Colonic mucosa (tissue), 4 donors: ENCODE measurements at regions of chr5 and their contacts with region 1.

Region 1: DNA sequence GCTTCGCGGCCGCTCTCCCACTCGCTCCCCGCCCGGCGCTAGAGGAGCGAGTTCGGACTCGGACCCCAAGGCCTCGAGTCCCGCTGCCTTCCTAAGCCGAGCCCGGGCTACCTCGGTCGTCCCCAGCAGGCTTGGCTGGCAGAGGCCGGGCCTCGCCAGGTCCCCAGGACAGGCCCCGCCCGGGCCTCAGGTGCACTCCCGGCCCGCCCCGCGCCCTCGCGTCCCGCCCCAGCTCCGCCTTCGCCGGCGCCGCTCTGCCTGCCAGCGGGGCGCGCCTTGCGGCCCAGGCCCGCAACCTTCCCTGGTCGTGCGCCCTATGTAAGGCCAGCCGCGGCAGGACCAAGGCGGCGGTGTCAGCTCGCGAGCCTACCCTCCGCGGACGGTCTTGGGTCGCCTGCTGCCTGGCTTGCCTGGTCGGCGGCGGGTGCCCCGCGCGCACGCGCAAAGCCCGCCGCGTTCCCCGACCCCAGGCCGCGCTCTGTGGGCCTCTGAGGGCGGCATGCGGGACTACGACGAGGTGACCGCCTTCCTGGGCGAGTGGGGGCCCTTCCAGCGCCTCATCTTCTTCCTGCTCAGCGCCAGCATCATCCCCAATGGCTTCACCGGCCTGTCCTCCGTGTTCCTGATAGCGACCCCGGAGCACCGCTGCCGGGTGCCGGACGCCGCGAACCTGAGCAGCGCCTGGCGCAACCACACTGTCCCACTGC is at the start of gene SLC22A5:
- DNase-seq: peak; percentile 84
- H3K4me3 ChIP-seq: peak within 1 kb of the TSS; percentile 78
- H3K27ac ChIP-seq: peak within 1 kb of the TSS; percentile 83
- H3K4me1 ChIP-seq: peaks cover 17% of the 10 kb centered on the region
- H3K27me3 ChIP-seq: no peaks in the 10 kb centered on the region
- CTCF ChIP-seq: no peak
- total RNA-seq, gene SLC22A5: 26.0 to 38.6 TPM

Region 2: DNA sequence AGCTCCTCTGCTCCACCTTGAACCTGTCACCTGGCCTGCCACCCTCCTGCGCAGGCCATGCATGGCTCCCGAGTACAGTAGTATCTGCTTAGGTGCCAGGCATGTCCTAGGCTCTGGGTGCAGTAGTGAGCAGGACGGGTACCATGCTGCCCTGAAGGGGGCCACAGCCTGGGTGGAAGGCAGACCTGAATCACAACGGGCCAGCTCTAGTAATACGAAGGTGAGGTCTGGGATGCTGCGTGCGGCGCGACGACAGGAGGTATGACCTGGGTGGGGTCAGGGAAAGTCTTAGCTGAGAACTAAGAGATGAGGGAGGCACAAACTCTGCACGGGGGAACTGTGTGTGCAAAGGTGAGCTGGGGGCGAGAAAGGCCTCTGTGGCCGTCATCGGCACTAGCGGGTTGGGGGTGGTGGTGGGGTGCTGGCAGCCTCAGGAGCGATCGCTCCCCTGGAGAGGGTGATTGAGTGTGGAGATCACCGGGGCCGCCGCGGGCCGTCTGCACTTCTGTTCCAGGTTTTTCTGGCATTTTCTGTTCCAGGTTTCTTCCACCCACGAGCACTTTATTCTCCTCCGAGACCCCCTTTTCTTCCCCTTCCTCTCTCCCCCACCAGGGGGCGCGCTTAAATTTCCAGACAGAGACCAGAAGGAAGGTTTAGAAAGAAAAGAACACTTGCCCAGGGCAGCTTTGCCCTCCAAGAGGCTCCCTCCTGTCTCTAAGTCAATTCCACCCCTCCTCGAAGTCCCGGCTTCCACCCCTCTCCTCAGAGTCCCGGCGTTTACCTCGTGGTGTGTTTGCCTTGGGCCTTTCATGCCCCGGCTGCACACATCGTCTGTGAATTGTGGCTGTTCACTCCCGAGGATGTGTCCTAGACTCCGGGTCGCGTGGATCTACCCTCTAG is 97.1 kb before region 1 on chr5:
- intact Hi-C with region 1: loop called (anchors 10 kb)
- DNase-seq: peak; percentile 83
- H3K4me3 ChIP-seq: no peak overlapping the region
- H3K27ac ChIP-seq: no peak overlapping the region
- H3K4me1 ChIP-seq: peaks cover 6% of the 10 kb centered on the region
- H3K27me3 ChIP-seq: no peaks in the 10 kb centered on the region
- CTCF ChIP-seq: peak; percentile 87

Region 3: DNA sequence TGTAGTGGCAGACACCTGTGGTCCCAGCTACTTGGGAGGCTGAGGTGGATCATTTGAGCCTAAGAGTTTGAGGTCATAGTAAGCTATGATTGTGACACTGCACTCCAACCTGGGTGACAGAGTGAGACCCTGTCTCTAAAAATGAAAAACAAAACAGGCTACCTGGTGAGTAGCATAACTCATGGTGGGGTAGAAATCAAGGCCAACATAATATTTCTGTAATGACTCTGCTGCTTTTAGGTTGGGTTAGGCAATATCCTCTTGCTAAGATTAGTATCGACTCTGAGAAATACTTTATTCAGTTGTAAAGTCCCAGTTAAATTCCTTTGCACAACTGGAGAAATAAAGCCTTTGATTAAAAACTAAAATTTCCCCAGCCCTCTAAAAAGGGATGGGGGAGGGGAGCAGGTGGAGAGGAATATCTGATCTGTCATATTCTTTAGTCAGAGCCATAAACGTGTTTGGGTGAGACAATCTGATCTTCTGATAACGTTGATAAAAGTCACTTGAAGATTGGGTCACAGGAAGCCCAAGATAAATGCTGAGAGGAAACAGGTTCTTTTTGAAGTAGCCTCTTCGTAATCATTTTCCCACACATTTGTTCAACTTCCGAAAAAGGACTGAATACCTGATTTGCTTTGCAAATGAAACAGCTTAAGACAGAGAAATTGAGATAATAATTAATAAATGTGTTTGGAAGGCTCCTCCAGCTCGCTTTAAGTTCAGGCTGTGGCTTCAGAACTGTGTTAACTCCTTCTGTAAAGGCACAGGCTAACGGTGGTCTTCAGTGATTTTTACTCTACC is 319.1 kb after region 1 on chr5:
- intact Hi-C with region 1: no loop called
- DNase-seq: no peak
- H3K4me3 ChIP-seq: no peak overlapping the region
- H3K27ac ChIP-seq: no peak overlapping the region
- H3K4me1 ChIP-seq: no peaks in the 10 kb centered on the region
- H3K27me3 ChIP-seq: no peaks in the 10 kb centered on the region
- CTCF ChIP-seq: no peak

Region 4: DNA sequence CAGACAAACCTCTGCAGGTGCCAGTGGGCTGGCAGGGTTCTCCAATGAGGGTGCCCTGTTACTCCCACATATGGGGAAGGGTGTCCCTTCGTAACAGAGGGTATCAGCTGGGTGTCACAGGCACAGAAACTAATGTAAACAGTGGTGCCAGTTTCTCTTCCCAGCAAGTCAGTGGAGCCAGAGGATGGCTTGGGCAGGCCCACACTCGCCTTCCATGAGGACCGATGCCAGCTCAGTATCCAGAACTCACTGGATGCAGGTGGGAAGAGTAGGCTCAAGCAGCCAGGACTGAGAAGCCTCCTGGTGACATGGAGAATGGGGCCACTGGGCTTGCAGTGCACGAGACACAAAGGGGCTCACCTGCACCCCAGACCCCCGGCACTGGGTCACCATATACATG is 1212.3 kb after region 1 on chr5:
- intact Hi-C with region 1: no loop called
- DNase-seq: no peak
- H3K4me3 ChIP-seq: no peak overlapping the region
- H3K27ac ChIP-seq: no peak overlapping the region
- H3K4me1 ChIP-seq: no peaks in the 10 kb centered on the region
- H3K27me3 ChIP-seq: no peaks in the 10 kb centered on the region
- CTCF ChIP-seq: no peak